PC-3 (cell line): ENCODE measurements at regions of chr3 and their contacts with region 1.

Region 1: DNA sequence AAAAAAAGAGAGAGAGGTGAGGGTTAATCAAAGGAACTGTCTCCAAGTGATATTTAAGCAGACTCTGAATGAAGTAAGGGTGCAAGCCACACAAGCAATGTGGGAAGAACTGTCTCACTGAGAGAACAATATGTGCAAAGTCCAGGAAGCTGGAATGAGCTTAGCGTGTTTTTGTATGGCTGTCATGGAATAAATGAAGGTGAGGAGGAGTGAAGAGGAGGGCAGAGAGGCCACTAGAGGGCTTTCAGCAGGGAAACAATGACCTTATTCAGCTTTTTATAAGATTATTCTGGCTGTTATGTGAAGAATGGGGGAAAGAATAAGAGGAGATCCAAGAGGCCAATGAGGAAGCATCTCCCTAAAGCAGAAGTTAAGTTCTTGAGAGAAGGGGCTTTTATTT is 86.9 kb upstream of the COL8A1 start:
- DNase-seq: no peak
- ATAC-seq: peak; percentile 58; the same call in 1 of the 2 replicates
- H3K4me3 ChIP-seq: no peak overlapping the region
- H3K27ac ChIP-seq: no peak overlapping the region
- H3K4me1 ChIP-seq: peaks cover under 1% of the 10 kb centered on the region; the same call in 1 of the 2 replicates
- H3K27me3 ChIP-seq: no peaks in the 10 kb centered on the region
- CTCF ChIP-seq: peak; percentile 61

Region 2: DNA sequence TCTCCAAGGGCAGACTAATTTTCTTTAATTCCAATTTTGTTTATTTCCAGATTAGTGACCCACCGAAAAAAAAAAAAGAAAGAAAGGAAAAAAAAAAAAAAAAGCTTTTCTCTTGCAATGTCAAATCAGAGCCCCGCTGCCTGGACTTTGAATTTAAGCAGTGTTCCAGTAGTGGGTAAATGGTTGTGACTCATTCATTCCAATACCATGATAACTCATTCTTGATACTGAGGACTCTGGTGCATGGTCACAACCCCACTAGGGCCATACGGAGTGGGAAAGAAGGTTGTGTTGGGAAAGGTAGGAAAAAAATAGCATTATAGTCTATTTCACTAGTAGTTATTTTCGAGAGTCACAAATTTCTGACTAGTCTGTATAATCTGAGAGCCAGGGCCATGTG is 27.7 kb after region 1 on chr3:
- CTCF ChIA-PET with region 1: no interaction called
- POLR2A ChIA-PET with region 1: no interaction called
- intact Hi-C with region 1: no loop called
- DNase-seq: peak; percentile 56
- ATAC-seq: peak; percentile 54
- H3K4me3 ChIP-seq: no peak overlapping the region
- H3K27ac ChIP-seq: no peak overlapping the region
- H3K4me1 ChIP-seq: no peaks in the 10 kb centered on the region
- H3K27me3 ChIP-seq: no peaks in the 10 kb centered on the region
- CTCF ChIP-seq: no peak

Region 3: DNA sequence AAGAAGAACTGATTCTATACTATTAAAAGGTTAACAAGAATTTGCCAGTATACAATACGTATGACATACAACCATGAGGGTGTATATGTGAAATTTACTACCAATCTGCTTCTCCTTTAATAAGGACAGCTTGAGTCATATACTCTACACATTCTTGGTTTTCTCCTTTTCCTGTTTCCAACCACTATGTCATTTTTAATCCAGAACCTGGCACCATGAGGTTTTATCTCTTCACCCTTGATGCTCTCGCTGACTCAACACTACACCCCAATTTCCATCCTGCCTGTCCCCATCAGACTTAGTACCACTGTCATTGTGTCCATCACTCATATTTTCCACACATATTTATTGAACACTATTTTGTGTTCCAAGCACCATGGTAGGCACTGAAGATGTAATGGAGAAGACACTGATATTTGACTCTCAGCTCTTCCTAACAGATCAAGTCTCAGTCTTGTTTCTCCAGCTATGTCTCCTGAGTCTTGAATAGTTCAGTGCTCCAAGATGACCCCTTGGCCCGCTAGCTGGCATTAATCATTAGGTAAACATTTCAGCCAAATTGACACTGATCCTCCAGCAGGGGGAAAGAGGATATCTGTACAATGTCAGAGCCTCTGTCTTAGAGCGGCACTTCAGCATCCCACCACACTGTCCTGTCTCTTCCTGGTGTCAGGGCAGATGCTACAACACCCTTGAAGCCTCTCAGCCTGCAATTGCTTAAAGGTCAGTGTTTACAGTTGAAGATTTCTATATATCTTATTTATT is 75.7 kb after region 1 on chr3:
- CTCF ChIA-PET with region 1: no interaction called
- POLR2A ChIA-PET with region 1: no interaction called
- intact Hi-C with region 1: loop called (anchors 2 kb)
- DNase-seq: peak; percentile 78
- ATAC-seq: peak; percentile 62
- H3K4me3 ChIP-seq: no peak overlapping the region
- H3K27ac ChIP-seq: peak overlapping the region; percentile 5; the same call in 1 of the 2 replicates
- H3K4me1 ChIP-seq: peaks cover 54% of the 10 kb centered on the region
- H3K27me3 ChIP-seq: no peaks in the 10 kb centered on the region
- CTCF ChIP-seq: peak; percentile 51